Sigmoid colon (tissue), 7 donors: ENCODE measurements at regions of chr2 and their contacts with region 1.

Region 1: GRCh38 chr2:33033606-33034081 is 86.9 kb downstream of the LTBP1 start:
- DNase-seq: no peak
- H3K4me3 ChIP-seq: peak overlapping the region; percentile 30 to 55 (median 46)
- H3K27ac ChIP-seq: peak overlapping the region; percentile 67 to 78 (median 75)
- H3K4me1 ChIP-seq: peaks cover 0 to 36% (median 14%) of the 10 kb centered on the region in 4 donors
- H3K27me3 ChIP-seq: no peaks in the 10 kb centered on the region
- CTCF ChIP-seq: peak; percentile 43 to 56 (median 50)
- EP300 ChIP-seq: no peak
- POLR2A ChIP-seq: no peak

Region 2: GRCh38 chr2:32732912-32733472 is 300.7 kb before region 1 on chr2:
- intact Hi-C with region 1: no loop called
- DNase-seq: no peak
- H3K4me3 ChIP-seq: no peak overlapping the region
- H3K27ac ChIP-seq: no peak overlapping the region
- H3K4me1 ChIP-seq: no peaks in the 10 kb centered on the region
- H3K27me3 ChIP-seq: no peaks in the 10 kb centered on the region
- CTCF ChIP-seq: no peak
- EP300 ChIP-seq: no peak
- POLR2A ChIP-seq: no peak

Region 3: DNA sequence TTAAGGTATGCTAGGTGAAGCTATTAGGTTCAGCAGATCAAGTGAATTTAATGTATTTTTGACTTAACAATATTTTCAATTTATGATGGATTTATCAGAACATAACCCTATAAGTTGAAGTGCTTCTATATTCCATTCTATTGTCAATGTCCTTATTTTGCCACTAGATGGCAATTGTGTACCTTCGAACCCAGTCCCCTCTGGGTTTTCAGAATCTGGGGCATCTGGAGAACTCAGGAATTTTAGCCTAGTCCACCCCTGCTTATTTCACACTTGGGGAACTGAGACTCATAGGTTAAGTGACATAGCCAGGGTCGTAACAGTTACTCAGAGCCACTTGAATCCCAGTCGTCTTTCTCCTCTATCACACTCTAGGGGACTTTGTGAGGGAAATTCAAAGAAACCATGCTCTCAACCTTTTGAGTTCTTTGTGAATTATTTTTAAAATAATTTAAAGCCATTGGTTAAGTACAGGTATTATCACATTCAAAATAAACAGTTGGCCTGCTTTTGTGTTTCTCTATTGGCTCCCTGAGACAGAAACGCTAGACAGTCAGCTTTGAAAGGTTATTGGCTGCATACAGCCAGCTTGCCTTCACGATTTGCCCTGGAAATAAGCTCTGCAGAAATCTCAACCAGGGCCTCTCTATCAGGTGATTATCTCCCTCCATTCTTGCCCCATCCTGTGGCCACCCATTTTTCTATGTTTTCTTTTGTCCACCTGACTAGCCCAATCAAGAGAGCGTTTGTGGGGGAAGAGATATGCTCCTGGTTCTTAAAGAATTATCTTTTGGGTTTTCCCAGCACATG is 260.8 kb before region 1 on chr2:
- intact Hi-C with region 1: loop called (anchors 1 kb)
- DNase-seq: no peak
- H3K4me3 ChIP-seq: no peak overlapping the region
- H3K27ac ChIP-seq: no peak overlapping the region
- H3K4me1 ChIP-seq: peaks cover 0 to 3% (median 0%) of the 10 kb centered on the region in 4 donors
- H3K27me3 ChIP-seq: no peaks in the 10 kb centered on the region
- CTCF ChIP-seq: peak in 3 of 4 experiments; percentile 53 to 66 (median 53)
- EP300 ChIP-seq: no peak
- POLR2A ChIP-seq: no peak

Region 4: DNA sequence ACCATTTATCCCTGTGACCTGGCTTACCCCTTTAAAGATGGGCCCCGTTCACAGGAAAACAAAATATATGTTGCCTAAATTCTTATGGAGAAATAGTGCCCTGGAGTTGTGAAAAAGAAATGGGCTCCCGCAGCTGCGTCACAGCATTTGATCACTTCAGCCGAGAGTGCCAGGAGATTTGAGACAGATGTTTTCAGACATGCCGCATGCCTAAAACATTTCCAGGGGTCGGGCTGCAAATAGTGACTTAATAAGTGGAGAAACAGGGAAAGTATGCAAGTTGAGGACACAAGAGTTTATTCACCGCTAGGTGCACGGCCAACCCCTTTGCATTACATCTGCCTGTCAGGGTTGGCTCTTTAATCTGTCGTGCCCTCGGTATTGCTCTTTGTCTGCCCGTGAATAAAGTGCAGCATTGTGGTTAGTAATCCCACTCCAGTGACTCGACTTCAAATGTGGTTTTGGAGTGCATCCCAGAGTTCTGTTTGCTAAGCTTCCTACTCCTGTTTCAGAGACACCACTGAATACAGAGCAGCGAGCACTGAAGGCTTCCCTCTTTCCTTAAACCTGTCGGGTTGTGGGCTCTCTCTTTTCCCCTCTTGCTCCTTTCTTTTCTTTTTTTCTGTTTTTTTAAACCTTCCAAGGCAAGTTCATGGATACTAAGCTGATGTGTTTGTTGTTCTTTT is 100.6 kb after region 1 on chr2:
- intact Hi-C with region 1: loop called (anchors 5 kb)
- DNase-seq: peak; percentile 85
- H3K4me3 ChIP-seq: peak overlapping the region; percentile 24 to 53 (median 48)
- H3K27ac ChIP-seq: peak overlapping the region; percentile 84 to 91 (median 89)
- H3K4me1 ChIP-seq: peaks cover 0 to 73% (median 60%) of the 10 kb centered on the region in 4 donors
- H3K27me3 ChIP-seq: no peaks in the 10 kb centered on the region
- CTCF ChIP-seq: peak in 1 of 4 experiments; percentile 21
- EP300 ChIP-seq: peak in 1 of 4 donors; percentile 2
- POLR2A ChIP-seq: peak in 1 of 2 donors; percentile 69

Region 5: DNA sequence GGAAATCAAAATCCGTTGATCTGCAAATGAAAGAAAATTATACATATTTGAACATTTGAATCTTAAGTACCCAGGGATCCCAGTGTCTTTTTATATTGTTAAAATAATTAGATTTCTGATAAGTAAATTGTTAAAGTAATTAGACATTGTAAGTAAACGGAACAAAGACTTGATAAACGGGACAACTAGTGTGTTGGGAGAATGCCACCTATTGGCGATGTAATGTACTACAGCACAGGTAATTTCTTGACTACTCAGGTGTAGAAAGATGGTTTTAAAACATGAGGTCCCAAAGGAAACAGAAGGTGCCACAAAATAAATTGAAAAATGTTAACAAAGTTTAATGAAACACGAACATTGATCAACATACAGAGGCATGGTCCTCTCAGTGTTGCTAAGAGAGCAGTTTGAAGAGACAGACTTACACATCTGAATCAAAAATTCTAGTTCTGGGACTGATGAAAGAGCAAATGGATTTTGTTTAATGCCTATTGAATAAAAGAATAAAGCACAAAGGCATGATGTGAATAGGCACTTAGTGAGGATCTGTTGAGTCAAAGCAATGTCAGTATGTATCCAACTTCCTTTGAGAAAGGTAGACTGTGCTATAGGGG is 339.4 kb after region 1 on chr2:
- intact Hi-C with region 1: loop called (anchors 5 kb)
- DNase-seq: no peak
- H3K4me3 ChIP-seq: no peak overlapping the region
- H3K27ac ChIP-seq: no peak overlapping the region
- H3K4me1 ChIP-seq: no peaks in the 10 kb centered on the region
- H3K27me3 ChIP-seq: no peaks in the 10 kb centered on the region
- CTCF ChIP-seq: peak; percentile 51 to 77 (median 65)
- EP300 ChIP-seq: no peak
- POLR2A ChIP-seq: no peak

Region 6: DNA sequence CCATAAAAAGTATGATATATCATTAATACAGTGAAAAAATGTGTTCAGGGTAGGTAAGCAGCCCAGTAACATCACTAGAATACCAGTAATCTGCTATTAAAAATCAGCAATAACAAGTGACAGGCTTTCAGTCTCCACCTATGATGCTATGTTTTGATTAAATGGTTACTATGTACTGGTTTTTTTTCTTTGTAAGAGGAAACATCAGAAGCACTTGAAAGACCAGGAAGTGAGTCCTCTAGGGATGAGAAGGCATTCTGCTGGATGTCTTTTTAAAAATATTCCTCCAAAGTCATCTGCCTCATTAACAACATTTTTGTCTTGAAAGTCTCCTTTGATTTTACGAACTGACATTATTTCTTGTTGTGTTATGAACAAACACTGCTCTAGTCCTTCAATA is 701.5 kb after region 1 on chr2:
- intact Hi-C with region 1: no loop called
- DNase-seq: no peak
- H3K4me3 ChIP-seq: no peak overlapping the region
- H3K27ac ChIP-seq: no peak overlapping the region
- H3K4me1 ChIP-seq: no peaks in the 10 kb centered on the region
- H3K27me3 ChIP-seq: no peaks in the 10 kb centered on the region
- CTCF ChIP-seq: no peak
- EP300 ChIP-seq: no peak
- POLR2A ChIP-seq: no peak